T-cell (primary cell): ENCODE measurements at regions of chr10 and their contacts with region 1.

Region 1: DNA sequence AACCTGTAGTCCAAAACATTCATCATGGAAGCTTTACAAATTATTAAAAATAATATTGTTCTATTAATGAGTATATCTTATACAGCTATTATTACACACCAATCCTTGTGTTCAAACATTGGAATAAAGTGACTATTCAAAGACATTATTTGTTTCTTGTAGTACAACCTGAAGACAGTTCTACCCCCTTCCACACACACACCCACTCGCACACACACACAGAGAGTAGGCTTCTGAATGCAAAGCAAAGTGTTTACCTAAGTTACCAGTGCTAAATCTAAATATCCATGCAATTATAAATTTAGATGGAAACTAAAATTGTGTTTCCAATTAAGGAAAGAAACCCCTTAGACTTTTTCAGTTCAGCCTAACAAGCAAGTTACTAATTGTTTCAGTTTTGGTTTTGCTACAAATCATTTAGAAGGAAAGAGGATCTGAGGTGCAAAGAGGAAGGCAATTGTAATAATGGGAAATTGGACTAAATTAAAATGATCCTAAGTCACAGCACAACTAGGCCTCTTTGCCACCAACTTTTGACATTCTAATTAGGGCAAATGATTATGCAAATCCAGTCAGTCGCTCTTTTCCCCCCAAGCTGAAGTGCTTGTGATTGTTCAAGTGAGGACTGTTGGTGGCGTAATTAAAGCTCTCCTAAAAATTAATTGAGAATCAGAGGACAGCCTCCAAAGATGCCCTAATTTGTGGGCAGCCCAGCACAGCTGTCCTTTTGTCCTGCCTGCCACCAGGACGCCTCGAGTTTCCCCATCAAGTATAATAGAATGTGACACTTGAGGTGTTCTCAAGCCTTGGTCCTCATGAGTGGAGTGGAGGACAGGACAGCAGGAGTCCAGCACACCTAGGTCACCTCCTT is 19.9 kb upstream of the ATOH7 start:
- DNase-seq: no peak
- ATAC-seq: no peak
- H3K4me3 ChIP-seq: no peak overlapping the region
- H3K4me3 Mint-ChIP-seq: no peak overlapping the region
- H3K27ac ChIP-seq: no peak overlapping the region
- H3K27ac Mint-ChIP-seq: no peak overlapping the region
- H3K4me1 ChIP-seq: no peaks in the 10 kb centered on the region
- H3K4me1 Mint-ChIP-seq: no peaks in the 10 kb centered on the region
- H3K27me3 ChIP-seq: no peaks in the 10 kb centered on the region
- H3K27me3 Mint-ChIP-seq: peaks cover 3 to 7% of the 10 kb centered on the region in 2 donors

Region 2: DNA sequence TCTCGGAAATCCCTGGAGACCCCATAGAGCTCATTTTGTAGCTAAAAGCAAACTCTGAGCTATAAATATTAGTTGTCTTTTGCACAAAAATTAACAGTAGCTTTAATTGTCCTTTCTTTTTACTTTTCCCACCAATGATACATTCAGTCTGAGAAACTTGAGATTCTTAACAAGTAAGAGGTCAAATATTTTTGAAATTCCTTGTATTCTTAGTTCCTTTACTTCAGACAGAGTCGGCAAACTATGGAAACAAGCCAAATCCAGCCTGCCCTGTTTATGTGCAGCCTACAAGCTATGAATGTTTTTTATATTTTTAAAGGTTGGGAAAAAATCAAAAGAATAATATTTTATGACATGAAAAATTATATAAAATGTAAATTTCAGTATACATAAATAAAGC is 702.5 kb before region 1 on chr10:
- CTCF ChIA-PET with region 1: no interaction called
- POLR2A ChIA-PET with region 1: no interaction called
- DNase-seq: no peak
- ATAC-seq: no peak
- H3K4me3 ChIP-seq: no peak overlapping the region
- H3K4me3 Mint-ChIP-seq: no peak overlapping the region
- H3K27ac ChIP-seq: no peak overlapping the region
- H3K27ac Mint-ChIP-seq: no peak overlapping the region
- H3K4me1 ChIP-seq: no peaks in the 10 kb centered on the region
- H3K4me1 Mint-ChIP-seq: no peaks in the 10 kb centered on the region
- H3K27me3 ChIP-seq: peaks cover 0 to 6% of the 10 kb centered on the region in 2 experiments
- H3K27me3 Mint-ChIP-seq: peaks cover 2 to 8% of the 10 kb centered on the region in 2 donors

Region 3: GRCh38 chr10:68318331-68319059 is 66.6 kb after region 1 on chr10:
- CTCF ChIA-PET with region 1: interaction called in 1 of 2 experiments, 13 read pairs
- POLR2A ChIA-PET with region 1: no interaction called
- DNase-seq: no peak
- ATAC-seq: no peak
- H3K4me3 ChIP-seq: no peak overlapping the region
- H3K4me3 Mint-ChIP-seq: no peak overlapping the region
- H3K27ac ChIP-seq: no peak overlapping the region
- H3K27ac Mint-ChIP-seq: no peak overlapping the region
- H3K4me1 ChIP-seq: peaks cover 6 to 9% of the 10 kb centered on the region in 2 experiments
- H3K4me1 Mint-ChIP-seq: peaks cover 5 to 9% (median 5%) of the 10 kb centered on the region in 3 donors
- H3K27me3 ChIP-seq: no peaks in the 10 kb centered on the region
- H3K27me3 Mint-ChIP-seq: no peaks in the 10 kb centered on the region